ENCODE measurements at regions of chr3 and their contacts with region 1.

Region 1: DNA sequence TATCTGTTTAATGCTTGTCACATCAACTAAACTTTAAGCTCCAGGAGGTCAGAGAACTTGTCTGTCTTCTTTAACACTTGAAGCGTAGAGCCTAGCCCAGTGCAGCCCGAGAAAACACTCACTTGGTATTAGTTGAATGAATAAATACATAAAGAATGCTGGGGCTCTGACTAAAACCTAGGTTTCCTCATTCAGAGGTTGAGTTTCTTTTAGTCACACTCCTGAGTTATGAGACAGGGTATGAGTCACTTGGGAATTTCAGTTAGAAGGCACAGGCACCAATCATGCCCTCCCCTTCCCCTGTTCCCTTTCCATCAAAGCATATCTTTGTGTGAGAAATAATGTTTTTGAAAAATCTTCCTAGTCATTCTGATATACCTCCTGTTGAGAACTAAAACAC is 589.8 kb upstream of the DPPA4 start:
- DNase-seq: peak; percentile 58
- H3K4me3 Mint-ChIP-seq: no peak overlapping the region
- H3K27ac Mint-ChIP-seq: peak overlapping the region; percentile 97
- H3K4me1 Mint-ChIP-seq: peaks cover 80% of the 10 kb centered on the region
- H3K27me3 Mint-ChIP-seq: no peaks in the 10 kb centered on the region
- CTCF ChIP-seq: no peak

Region 2: GRCh38 chr3:109563149-109563548 is 364.0 kb before region 1 on chr3:
- CTCF ChIA-PET with region 1: interaction called, 6 read pairs
- intact Hi-C with region 1: loop called (anchors 10 kb)
- DNase-seq: no peak
- H3K4me3 Mint-ChIP-seq: no peak overlapping the region
- H3K27ac Mint-ChIP-seq: no peak overlapping the region
- H3K4me1 Mint-ChIP-seq: peaks cover 29% of the 10 kb centered on the region
- H3K27me3 Mint-ChIP-seq: no peaks in the 10 kb centered on the region
- CTCF ChIP-seq: no peak

Region 3: DNA sequence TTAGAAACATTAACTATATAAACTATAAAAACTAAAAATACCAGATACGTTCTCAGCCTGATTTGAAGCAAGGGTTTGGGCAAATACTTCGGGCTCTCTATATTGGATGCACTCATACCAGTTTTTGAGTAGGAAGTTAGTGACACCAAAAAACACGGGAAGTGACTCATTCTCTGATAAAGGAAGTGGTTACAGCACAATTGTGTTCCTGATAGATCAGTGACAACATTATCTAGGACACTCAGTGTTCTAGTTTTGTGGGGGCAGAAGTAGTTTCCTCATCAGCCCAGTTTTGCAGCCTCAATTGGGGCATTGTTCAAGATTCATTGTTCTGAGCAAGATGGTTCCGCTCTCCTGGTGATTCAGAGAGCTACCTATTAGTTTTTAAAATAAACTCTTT is 120.2 kb before region 1 on chr3:
- CTCF ChIA-PET with region 1: no interaction called
- intact Hi-C with region 1: loop called (anchors 2 kb)
- DNase-seq: peak; percentile 48
- H3K4me3 Mint-ChIP-seq: no peak overlapping the region
- H3K27ac Mint-ChIP-seq: peak overlapping the region; percentile 94
- H3K4me1 Mint-ChIP-seq: peaks cover 33% of the 10 kb centered on the region
- H3K27me3 Mint-ChIP-seq: no peaks in the 10 kb centered on the region
- CTCF ChIP-seq: no peak

Region 4: DNA sequence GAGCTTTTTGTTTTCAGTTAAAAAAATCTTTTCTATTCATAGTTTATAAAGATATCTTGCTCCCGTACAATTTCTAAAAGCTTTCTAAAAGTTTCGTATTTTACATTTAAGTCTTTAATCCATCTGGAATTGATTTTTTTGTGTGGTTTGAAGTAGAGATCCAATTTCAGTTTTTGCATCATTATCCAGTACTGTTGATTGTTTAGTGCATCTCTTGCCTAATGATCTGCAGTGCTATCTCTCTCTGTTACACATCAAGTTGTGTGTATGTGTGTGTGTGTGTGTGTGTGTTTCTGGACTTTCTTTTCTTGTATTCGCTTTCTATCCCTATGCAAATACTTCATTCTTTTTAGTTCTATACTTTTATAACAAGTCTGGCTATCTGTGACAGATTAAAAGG is 16.0 kb after region 1 on chr3:
- CTCF ChIA-PET with region 1: no interaction called
- intact Hi-C with region 1: no loop called
- DNase-seq: no peak
- H3K4me3 Mint-ChIP-seq: no peak overlapping the region
- H3K27ac Mint-ChIP-seq: no peak overlapping the region
- H3K4me1 Mint-ChIP-seq: no peaks in the 10 kb centered on the region
- H3K27me3 Mint-ChIP-seq: no peaks in the 10 kb centered on the region
- CTCF ChIP-seq: no peak

Region 5: DNA sequence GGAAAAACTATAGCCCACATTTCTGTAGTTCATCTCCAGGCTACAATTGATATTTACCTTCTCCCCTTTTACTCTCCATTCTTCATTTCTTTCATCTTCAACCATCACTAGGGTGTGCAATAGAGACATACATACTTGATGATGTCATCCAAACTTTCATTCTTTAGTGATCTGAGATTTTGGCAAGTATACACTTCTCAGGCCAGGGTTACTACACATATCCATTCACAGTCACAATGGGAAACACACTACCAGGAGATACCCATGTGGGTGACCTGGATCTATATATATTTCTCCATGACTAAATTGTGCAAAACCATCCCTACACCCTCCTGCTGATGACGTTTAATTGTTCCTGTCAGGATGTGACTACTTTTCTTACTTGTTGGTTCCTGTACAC is 179.6 kb after region 1 on chr3:
- CTCF ChIA-PET with region 1: no interaction called
- intact Hi-C with region 1: no loop called
- DNase-seq: no peak
- H3K4me3 Mint-ChIP-seq: no peak overlapping the region
- H3K27ac Mint-ChIP-seq: no peak overlapping the region
- H3K4me1 Mint-ChIP-seq: no peaks in the 10 kb centered on the region
- H3K27me3 Mint-ChIP-seq: no peaks in the 10 kb centered on the region
- CTCF ChIP-seq: no peak

Region 6: GRCh38 chr3:110178965-110179364 is 251.8 kb after region 1 on chr3:
- CTCF ChIA-PET with region 1: no interaction called
- intact Hi-C with region 1: loop called (anchors 5 kb)
- DNase-seq: no peak
- H3K4me3 Mint-ChIP-seq: no peak overlapping the region
- H3K27ac Mint-ChIP-seq: no peak overlapping the region
- H3K4me1 Mint-ChIP-seq: no peaks in the 10 kb centered on the region
- H3K27me3 Mint-ChIP-seq: no peaks in the 10 kb centered on the region
- CTCF ChIP-seq: no peak